CD4-positive, alpha-beta T cell (primary cell): ENCODE measurements at regions of chr20 and their contacts with region 1.

Region 1: DNA sequence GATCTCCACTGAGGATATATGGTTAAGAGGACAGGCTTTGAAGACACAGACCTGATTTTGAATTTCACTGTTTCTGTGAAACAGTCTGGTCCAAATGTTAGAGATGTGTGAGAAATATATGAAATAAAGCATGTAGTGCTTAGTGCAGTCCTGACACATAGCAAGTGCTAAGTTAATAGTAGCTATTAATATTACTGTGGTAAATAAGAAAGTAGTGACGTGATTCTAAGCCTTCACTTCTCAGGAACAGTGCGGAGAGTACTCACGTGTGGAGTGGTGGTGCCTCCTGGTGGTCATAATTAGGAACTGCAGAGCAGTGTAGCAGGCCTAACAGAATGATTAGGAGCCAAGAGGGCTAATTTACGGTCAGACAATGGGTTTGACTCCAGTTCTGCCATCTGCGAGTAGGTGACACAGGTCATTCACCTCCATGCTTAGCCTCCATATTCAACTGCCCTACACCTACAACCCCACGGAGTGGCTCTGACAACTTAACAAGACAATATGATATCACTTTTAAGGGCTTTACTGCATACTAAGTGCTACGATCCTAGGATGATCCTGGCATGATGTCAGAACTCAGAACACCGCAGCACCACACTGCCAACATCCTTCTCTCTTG is 106.2 kb downstream of the JPH2 start:
- DNase-seq: peak; percentile 67 to 90 (median 76)
- ATAC-seq: peak; percentile 97
- H3K4me3 ChIP-seq: no peak overlapping the region
- H3K4me3 Mint-ChIP-seq: no peak overlapping the region
- H3K27ac ChIP-seq: no peak overlapping the region
- H3K27ac Mint-ChIP-seq: peak overlapping the region; percentile 61
- H3K4me1 ChIP-seq: peaks cover 12% of the 10 kb centered on the region
- H3K4me1 Mint-ChIP-seq: peaks cover 33% of the 10 kb centered on the region
- H3K27me3 ChIP-seq: no peaks in the 10 kb centered on the region
- H3K27me3 Mint-ChIP-seq: no peaks in the 10 kb centered on the region
- CTCF ChIP-seq: peak; percentile 98

Region 2: DNA sequence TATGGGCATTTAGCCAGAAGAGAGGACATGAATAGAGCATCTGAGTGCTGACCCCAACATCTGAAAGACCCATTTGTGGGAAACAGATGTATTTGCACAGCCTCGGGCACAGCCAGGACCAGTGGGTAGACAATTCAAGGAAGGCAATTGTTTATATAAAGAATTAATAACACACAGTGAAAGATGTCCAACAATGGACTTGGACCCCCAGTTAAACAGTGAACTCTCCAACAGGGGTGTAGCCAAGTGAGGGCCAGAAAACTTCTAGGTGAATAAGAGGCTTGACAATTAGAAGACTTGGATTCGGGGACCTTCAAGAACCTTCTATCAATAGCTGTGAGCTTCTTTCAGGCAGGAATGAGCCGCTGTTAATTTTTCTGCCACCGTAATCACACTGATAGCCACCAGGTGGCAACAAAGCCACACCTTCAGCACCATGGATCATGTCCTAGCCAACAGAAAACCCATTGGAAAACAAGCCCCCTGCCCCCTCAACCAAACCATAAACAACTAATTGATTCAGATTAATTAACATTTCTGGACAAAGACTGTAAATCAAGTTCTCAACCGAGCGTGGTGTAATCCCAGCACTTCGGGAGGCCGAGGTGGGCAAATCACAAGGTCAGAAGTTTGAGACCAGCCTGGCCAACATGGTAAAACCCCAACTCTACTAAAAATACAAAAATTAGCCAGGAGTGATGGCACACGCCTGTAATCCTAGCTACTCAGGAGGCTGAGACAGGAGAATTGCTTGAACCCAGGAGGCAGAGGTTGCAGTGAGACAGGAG is 631.8 kb before region 1 on chr20:
- CTCF ChIA-PET with region 1: no interaction called
- POLR2A ChIA-PET with region 1: no interaction called
- intact Hi-C with region 1: loop called in 1 of 2 experiments (anchors 2 kb)
- DNase-seq: peak; percentile 16 to 72 (median 32)
- ATAC-seq: peak; percentile 75
- H3K4me3 ChIP-seq: no peak overlapping the region
- H3K4me3 Mint-ChIP-seq: no peak overlapping the region
- H3K27ac ChIP-seq: no peak overlapping the region
- H3K27ac Mint-ChIP-seq: no peak overlapping the region
- H3K4me1 ChIP-seq: peaks cover 4% of the 10 kb centered on the region
- H3K4me1 Mint-ChIP-seq: peaks cover 6% of the 10 kb centered on the region
- H3K27me3 ChIP-seq: peaks cover 5 to 12% of the 10 kb centered on the region in 2 experiments
- H3K27me3 Mint-ChIP-seq: peaks cover 49% of the 10 kb centered on the region
- CTCF ChIP-seq: peak; percentile 76

Region 3: DNA sequence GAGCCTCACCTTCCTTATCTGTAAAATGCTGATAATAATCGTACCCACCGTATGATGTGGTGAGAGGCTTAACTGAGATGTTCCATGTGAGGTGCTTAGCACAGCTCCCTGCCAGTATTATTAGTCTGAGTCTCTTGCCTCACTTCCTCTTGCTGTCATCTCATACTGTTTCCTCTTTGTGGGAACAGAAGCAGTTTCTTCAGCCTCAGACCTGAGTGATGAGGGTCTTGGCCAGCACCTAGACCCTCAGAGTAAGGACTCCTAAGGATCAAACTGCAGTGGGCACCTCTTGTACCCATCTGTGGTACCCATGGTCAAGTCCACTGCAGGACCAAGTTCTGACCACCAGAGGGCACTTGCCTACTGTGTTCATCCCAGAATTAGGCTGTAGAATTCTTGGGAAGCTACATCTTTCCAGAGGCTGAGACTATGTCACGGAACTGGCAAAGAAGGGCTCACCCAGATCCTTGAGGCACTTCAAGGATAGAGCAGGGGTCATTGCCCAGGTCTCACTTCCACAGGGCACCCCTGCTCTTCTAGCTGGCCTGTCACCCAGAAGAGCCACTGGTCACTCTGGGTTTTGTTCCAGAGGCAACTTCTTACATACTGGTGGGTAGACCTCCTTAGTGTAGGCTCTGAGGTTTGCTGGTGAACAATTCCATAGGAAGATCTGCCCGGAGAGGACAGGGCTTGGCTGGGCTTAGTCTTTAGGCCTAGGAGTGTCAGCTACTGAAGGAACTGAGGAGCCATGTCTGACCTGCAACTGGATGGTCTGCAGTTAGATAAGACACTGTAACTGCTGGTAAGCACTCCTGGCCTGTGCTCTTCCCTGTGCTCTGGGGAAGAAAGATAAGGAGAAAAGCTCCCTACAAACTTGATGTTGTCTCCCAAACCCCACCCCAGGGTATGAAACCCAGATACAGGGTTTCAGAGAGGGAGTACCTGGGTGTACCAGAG is 542.6 kb before region 1 on chr20:
- CTCF ChIA-PET with region 1: no interaction called
- POLR2A ChIA-PET with region 1: no interaction called
- intact Hi-C with region 1: loop called (anchors 1 to 2 kb)
- DNase-seq: peak; percentile 16 to 62 (median 30)
- ATAC-seq: peak; percentile 56
- H3K4me3 ChIP-seq: no peak overlapping the region
- H3K4me3 Mint-ChIP-seq: no peak overlapping the region
- H3K27ac ChIP-seq: no peak overlapping the region
- H3K27ac Mint-ChIP-seq: no peak overlapping the region
- H3K4me1 ChIP-seq: no peaks in the 10 kb centered on the region
- H3K4me1 Mint-ChIP-seq: no peaks in the 10 kb centered on the region
- H3K27me3 ChIP-seq: no peaks in the 10 kb centered on the region
- H3K27me3 Mint-ChIP-seq: no peaks in the 10 kb centered on the region
- CTCF ChIP-seq: peak; percentile 92

Region 4: DNA sequence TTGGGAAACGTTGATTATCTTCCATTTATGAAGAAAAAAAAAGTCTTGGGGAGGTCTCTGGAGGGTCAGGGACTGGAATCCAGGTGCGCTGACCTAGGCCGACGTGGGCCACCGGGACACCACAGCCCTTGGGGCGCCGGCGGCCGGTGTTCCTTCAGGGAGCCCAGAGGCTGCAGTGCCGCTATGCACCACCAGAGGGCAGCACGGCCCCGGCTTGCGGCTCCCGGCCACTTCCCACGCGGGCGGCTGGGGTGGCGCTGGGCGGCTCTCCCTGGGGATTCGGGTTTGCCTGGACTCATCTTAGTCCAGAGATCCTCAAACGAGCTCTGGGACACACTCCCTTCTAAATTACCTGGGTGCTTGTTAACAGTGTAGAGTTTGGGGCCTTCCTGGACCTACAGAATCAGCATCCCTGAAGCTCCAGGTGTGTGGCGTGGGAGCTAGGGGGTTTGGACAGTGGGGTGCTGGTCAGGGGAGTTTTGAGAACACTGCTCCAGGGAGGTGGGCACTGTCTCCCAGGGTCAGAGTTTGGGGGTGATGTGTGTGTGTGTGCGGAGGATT is 330.9 kb before region 1 on chr20:
- CTCF ChIA-PET with region 1: interaction called, 14 read pairs
- POLR2A ChIA-PET with region 1: no interaction called
- intact Hi-C with region 1: loop called (anchors 1 kb)
- DNase-seq: peak; percentile 54 to 92 (median 80)
- ATAC-seq: peak; percentile 84
- H3K4me3 ChIP-seq: no peak overlapping the region
- H3K4me3 Mint-ChIP-seq: no peak overlapping the region
- H3K27ac ChIP-seq: no peak overlapping the region
- H3K27ac Mint-ChIP-seq: no peak overlapping the region
- H3K4me1 ChIP-seq: peaks cover 33% of the 10 kb centered on the region
- H3K4me1 Mint-ChIP-seq: peaks cover 30% of the 10 kb centered on the region
- H3K27me3 ChIP-seq: no peaks in the 10 kb centered on the region
- H3K27me3 Mint-ChIP-seq: no peaks in the 10 kb centered on the region
- CTCF ChIP-seq: peak; percentile 99

Region 5: GRCh38 chr20:43840382-43841070 is 240.2 kb before region 1 on chr20:
- CTCF ChIA-PET with region 1: interaction called, 3 read pairs
- POLR2A ChIA-PET with region 1: no interaction called
- intact Hi-C with region 1: loop called (anchors 5 to 10 kb)
- DNase-seq: peak in 11 of 14 experiments; percentile 7 to 57 (median 23)
- ATAC-seq: peak; percentile 64
- H3K4me3 ChIP-seq: no peak overlapping the region
- H3K4me3 Mint-ChIP-seq: no peak overlapping the region
- H3K27ac ChIP-seq: no peak overlapping the region
- H3K27ac Mint-ChIP-seq: no peak overlapping the region
- H3K4me1 ChIP-seq: peaks cover 17% of the 10 kb centered on the region
- H3K4me1 Mint-ChIP-seq: peaks cover 13% of the 10 kb centered on the region
- H3K27me3 ChIP-seq: no peaks in the 10 kb centered on the region
- H3K27me3 Mint-ChIP-seq: no peaks in the 10 kb centered on the region
- CTCF ChIP-seq: no peak

Region 6: DNA sequence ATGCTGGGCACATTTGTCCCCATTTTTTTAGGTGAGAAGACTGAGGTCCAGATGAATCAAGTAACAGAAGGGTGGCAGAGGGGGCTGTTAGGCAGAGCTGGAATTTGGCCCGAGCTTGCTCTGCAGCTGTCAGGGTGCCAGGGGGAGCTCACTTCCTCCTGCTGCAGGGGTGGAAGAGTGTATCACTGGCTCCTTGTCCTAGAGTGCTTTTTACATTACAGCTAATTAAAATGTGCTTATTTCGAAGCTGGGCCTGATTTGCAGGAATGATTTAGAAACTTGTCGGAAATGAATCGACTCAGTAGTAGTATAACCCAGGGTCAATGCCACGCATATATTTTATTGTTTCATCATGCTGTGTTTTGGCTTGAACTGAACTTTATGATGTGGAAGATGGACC is 155.0 kb before region 1 on chr20:
- CTCF ChIA-PET with region 1: no interaction called
- POLR2A ChIA-PET with region 1: no interaction called
- intact Hi-C with region 1: loop called in 1 of 2 experiments (anchors 5 kb)
- DNase-seq: peak in 8 of 14 experiments; percentile 9 to 56 (median 30)
- ATAC-seq: peak; percentile 75
- H3K4me3 ChIP-seq: no peak overlapping the region
- H3K4me3 Mint-ChIP-seq: peak overlapping the region; percentile 66
- H3K27ac ChIP-seq: no peak overlapping the region
- H3K27ac Mint-ChIP-seq: peak overlapping the region; percentile 43
- H3K4me1 ChIP-seq: peaks cover 49% of the 10 kb centered on the region
- H3K4me1 Mint-ChIP-seq: peaks cover 73% of the 10 kb centered on the region
- H3K27me3 ChIP-seq: peaks cover 0 to 3% of the 10 kb centered on the region in 2 experiments
- H3K27me3 Mint-ChIP-seq: peaks cover 5% of the 10 kb centered on the region
- CTCF ChIP-seq: no peak

Region 7: DNA sequence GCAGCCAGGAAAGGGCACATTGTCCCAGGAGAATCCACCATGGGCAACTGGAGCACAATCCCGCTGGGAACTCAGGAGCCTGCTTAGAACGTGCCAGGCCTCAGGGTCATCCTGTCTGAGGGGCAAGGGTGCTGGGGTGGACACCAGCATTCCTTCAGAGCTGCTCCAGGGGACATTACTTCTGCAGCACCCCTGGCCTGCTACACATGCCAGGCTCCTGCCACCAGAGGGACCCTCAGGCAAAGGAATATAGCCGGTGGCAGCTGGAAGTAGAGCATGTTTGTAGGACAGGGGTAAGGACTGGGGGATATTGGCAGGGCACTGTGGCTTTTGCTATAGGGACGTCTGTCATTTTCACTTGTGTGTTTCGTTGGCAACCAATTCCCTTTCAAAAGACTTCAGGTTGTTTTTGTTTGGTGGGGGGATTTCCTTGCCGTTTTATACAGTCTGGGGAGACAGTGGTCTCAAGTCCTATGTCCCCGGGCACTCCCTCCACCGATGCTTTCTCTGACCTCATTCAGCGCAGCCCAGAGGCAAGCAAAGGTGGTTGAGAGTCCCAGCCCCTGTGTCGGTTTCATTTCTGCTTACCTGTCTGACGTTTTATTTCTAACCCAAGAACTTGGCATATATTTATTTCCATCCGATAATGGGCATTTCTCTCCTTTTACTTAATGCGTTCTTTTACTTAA is 24.6 kb before region 1 on chr20:
- CTCF ChIA-PET with region 1: interaction called, 40 read pairs
- POLR2A ChIA-PET with region 1: interaction called, 16 read pairs
- intact Hi-C with region 1: loop called (anchors 1 kb)
- DNase-seq: peak; percentile 53 to 83 (median 65)
- ATAC-seq: peak; percentile 97
- H3K4me3 ChIP-seq: no peak overlapping the region
- H3K4me3 Mint-ChIP-seq: no peak overlapping the region
- H3K27ac ChIP-seq: no peak overlapping the region
- H3K27ac Mint-ChIP-seq: peak overlapping the region; percentile 15
- H3K4me1 ChIP-seq: peaks cover 12% of the 10 kb centered on the region
- H3K4me1 Mint-ChIP-seq: peaks cover 38% of the 10 kb centered on the region
- H3K27me3 ChIP-seq: no peaks in the 10 kb centered on the region
- H3K27me3 Mint-ChIP-seq: no peaks in the 10 kb centered on the region
- CTCF ChIP-seq: peak; percentile 71

Region 8: GRCh38 chr20:44309763-44310663 is 229.3 kb after region 1 on chr20:
- CTCF ChIA-PET with region 1: no interaction called
- POLR2A ChIA-PET with region 1: no interaction called
- intact Hi-C with region 1: no loop called
- DNase-seq: peak in 1 of 14 experiments; percentile 11
- ATAC-seq: no peak
- H3K4me3 ChIP-seq: peak overlapping the region; percentile 99
- H3K4me3 Mint-ChIP-seq: peak overlapping the region; percentile 95
- H3K27ac ChIP-seq: no peak overlapping the region
- H3K27ac Mint-ChIP-seq: peak overlapping the region; percentile 76
- H3K4me1 ChIP-seq: peaks cover 28% of the 10 kb centered on the region
- H3K4me1 Mint-ChIP-seq: peaks cover 28% of the 10 kb centered on the region
- H3K27me3 ChIP-seq: no peaks in the 10 kb centered on the region
- H3K27me3 Mint-ChIP-seq: no peaks in the 10 kb centered on the region
- CTCF ChIP-seq: no peak